Naive thymus-derived CD4-positive, alpha-beta T cell (primary cell): ENCODE measurements at regions of chr7 and their contacts with region 1.

Region 1: DNA sequence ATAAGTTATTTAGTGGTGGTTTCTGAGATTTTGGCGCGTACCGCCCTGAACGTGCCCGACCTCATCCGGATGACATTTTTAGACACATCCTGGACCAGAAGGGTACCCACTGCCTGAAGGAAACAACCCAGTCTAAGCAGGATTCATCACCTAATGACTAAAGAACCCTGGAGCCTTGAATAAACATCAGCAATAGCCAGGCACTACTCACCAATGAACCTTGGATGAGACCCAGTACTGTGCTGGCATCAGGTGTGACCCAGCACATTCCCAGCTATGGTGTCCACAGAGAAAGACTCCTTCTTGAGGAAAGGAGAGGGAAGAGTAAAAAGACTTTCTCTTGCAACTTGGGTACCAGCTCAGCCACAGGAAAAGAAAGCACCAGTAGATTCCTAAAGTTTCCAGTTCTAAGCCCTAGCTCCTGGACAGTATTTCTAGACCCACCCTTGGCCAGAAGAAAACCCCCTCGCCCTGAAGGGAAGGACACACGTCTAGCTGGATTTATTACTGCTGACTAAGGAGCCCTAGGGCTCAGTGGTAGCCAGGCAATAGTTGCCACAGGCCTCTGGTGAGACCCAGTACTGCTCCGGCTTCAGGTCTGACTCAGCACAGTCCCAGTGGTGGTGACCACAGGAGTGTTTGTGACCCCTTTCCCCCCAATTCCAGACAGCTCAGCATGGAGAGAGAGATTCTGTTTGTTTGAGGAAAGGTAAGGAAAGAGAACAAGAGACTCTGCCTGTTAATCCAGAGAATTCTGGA is 32.5 kb downstream of the ZNF277 start:
- DNase-seq: no peak
- ATAC-seq: no peak
- H3K4me3 ChIP-seq: no peak overlapping the region
- H3K4me3 Mint-ChIP-seq: no peak overlapping the region
- H3K27ac ChIP-seq: no peak overlapping the region
- H3K27ac Mint-ChIP-seq: no peak overlapping the region
- H3K4me1 ChIP-seq: no peaks in the 10 kb centered on the region
- H3K4me1 Mint-ChIP-seq: peaks cover 0 to 22% (median 5%) of the 10 kb centered on the region in 7 donors
- H3K27me3 ChIP-seq: no peaks in the 10 kb centered on the region
- H3K27me3 Mint-ChIP-seq: no peaks in the 10 kb centered on the region

Region 2: GRCh38 chr7:111855161-111855856 is 383.7 kb before region 1 on chr7:
- CTCF ChIA-PET with region 1: no interaction called
- POLR2A ChIA-PET with region 1: no interaction called
- intact Hi-C with region 1: no loop called
- DNase-seq: no peak
- ATAC-seq: peak; percentile 20
- H3K4me3 ChIP-seq: no peak overlapping the region
- H3K4me3 Mint-ChIP-seq: no peak overlapping the region
- H3K27ac ChIP-seq: no peak overlapping the region
- H3K27ac Mint-ChIP-seq: no peak overlapping the region
- H3K4me1 ChIP-seq: no peaks in the 10 kb centered on the region
- H3K4me1 Mint-ChIP-seq: peaks cover 0 to 5% (median 0%) of the 10 kb centered on the region in 7 donors
- H3K27me3 ChIP-seq: no peaks in the 10 kb centered on the region
- H3K27me3 Mint-ChIP-seq: peaks cover 0 to 19% (median 10%) of the 10 kb centered on the region in 5 donors

Region 3: GRCh38 chr7:112260950-112261349 is 21.9 kb after region 1 on chr7:
- CTCF ChIA-PET with region 1: no interaction called
- POLR2A ChIA-PET with region 1: no interaction called
- intact Hi-C with region 1: loop called in 1 of 2 experiments (anchors 1 kb)
- DNase-seq: no peak
- ATAC-seq: no peak
- H3K4me3 ChIP-seq: no peak overlapping the region
- H3K4me3 Mint-ChIP-seq: no peak overlapping the region
- H3K27ac ChIP-seq: no peak overlapping the region
- H3K27ac Mint-ChIP-seq: no peak overlapping the region
- H3K4me1 ChIP-seq: peaks cover 0 to under 1% of the 10 kb centered on the region in 2 donors
- H3K4me1 Mint-ChIP-seq: peaks cover 0 to 55% (median 37%) of the 10 kb centered on the region in 7 donors
- H3K27me3 ChIP-seq: no peaks in the 10 kb centered on the region
- H3K27me3 Mint-ChIP-seq: no peaks in the 10 kb centered on the region